Activated CD4-positive, alpha-beta T cell treated with anti-CD3 and anti-CD28 coated beads for 36 hours (primary cell): ENCODE measurements at regions of chr17 and their contacts with region 1.

Region 1: DNA sequence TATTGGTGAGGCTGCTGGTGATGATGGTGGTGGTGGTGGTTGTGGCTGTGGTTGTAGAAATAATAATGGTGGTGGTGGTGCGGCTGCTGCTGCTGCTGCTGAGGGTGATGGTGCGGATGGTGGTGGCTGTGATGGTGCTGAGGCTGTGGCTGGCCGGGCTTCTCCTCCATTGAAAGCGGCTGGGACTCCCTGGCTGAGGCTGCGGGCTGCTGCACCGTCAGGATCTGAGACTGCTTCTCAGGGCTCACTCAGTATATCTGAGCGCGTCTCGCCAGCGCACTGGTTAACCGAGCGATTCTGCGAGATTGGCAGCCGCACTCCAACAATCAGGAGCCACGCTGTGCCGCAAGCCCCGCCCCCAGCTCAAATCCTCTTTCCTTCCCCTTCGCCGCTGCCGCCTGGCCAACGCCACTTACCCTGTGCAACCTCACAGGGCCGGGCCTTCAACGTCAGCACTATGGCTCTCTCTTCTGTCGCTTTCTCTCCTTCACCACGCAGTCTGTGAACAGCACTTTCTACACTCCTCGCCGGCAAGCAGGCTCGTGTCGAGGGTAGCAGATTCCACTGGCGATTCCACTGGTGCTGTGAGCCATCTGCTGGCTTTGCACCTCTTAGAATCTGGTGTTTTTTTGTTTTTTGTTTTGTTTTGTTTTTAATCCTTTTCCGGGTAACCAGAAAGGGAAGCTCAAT is at the start of gene NUFIP2:
- DNase-seq: peak; percentile 99
- ATAC-seq: peak; percentile 93
- H3K4me3 Mint-ChIP-seq: peak within 1 kb of the TSS; percentile 100
- H3K27ac Mint-ChIP-seq: peak within 1 kb of the TSS; percentile 99
- H3K4me1 Mint-ChIP-seq: peaks cover 27% of the 10 kb centered on the region
- H3K27me3 Mint-ChIP-seq: no peaks in the 10 kb centered on the region
- total RNA-seq, gene NUFIP2: 55.1 to 93.1 TPM

Region 2: DNA sequence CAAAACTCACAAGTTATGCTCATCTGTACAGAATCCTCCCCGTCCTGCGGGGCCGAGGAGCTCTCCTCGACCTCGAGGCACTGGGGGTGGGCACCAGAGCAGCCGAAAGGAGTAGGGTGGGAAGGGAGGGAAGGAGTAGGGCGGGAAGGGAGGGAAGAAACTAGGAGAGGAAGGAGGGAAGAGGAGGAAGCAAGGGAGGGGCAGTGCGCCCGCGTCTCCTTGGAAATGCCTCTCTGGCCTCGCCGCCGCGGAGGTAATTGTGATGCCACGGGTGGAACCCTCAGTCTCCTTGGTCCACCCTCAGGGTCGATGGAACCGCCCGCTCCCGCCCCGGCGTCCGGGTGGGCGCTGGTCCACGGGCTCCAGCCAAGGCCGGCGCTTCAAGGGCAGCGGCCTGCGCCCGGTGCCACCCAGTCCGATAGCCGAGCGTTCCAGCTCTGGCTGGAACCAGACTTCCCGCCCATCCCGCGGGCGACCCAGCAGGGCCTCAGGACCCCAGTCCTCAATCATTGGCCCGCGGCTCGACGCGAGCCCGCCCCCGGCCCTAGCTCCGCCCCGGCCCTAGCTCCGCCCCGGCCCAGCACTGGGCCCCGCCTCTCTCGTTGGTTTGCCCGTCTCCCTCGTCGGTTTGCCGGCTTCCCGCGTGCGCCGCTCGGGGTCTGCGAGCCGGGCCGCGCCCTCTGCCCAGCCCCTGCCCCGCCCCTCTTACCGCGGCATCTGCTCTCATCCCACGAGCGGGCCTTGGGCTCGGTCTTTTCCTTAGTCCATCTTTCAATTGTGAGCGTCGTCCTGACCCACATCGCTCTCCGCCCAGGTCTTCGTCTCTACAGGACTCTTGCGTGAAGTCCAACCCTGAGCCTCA is 582.9 kb before region 1 on chr17:
- CTCF ChIA-PET with region 1: no interaction called
- POLR2A ChIA-PET with region 1: no interaction called
- intact Hi-C with region 1: loop called in 1 of 2 experiments (anchors 5 kb)
- DNase-seq: peak; percentile 94
- ATAC-seq: peak; percentile 90
- H3K4me3 Mint-ChIP-seq: peak overlapping the region; percentile 80
- H3K27ac Mint-ChIP-seq: peak overlapping the region; percentile 91
- H3K4me1 Mint-ChIP-seq: peaks cover 19% of the 10 kb centered on the region
- H3K27me3 Mint-ChIP-seq: peaks cover 17% of the 10 kb centered on the region

Region 3: DNA sequence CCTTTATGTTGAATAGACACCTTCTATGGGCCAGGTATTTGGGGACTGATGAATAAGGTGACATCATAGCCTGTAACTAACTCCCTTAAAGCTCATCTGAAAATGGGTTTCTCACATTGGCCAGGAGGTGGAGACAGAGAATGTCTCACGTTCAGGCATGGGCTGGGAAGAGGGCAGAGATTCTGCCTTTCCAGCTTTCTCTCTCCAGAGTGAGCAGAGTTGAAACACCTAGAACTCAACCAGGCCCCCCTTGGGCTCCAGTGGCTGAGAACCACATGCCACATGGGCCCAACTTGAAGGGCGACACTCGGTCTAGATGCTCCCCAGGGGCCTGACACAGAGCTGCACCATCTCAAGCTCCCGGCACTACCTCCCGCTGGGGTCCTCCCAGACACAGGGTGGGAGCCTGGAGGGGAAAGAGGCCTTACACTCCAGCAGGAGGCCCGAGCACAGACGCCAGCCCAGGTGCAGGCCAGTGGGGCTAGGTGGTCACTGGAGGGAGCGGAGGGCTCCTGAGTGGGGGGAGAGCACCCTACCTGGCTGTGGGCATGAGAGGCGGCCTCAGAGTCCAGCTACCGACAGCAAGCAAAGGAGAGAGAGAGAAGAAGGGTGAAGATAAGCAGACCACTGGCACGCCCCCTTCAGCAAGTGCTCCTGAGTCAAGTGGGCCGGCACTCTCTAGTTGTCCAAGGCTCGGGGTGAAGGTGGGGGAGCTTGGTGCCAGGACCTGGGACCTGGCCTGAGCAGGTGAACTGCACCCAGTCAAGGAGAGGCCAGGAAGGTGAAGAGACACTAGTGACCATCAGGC is 169.7 kb before region 1 on chr17:
- CTCF ChIA-PET with region 1: interaction called, 10 read pairs
- POLR2A ChIA-PET with region 1: no interaction called
- intact Hi-C with region 1: loop called in 1 of 2 experiments (anchors 5 kb)
- DNase-seq: peak; percentile 61
- ATAC-seq: peak; percentile 98
- H3K4me3 Mint-ChIP-seq: no peak overlapping the region
- H3K27ac Mint-ChIP-seq: no peak overlapping the region
- H3K4me1 Mint-ChIP-seq: peaks cover 3% of the 10 kb centered on the region
- H3K27me3 Mint-ChIP-seq: no peaks in the 10 kb centered on the region

Region 4: DNA sequence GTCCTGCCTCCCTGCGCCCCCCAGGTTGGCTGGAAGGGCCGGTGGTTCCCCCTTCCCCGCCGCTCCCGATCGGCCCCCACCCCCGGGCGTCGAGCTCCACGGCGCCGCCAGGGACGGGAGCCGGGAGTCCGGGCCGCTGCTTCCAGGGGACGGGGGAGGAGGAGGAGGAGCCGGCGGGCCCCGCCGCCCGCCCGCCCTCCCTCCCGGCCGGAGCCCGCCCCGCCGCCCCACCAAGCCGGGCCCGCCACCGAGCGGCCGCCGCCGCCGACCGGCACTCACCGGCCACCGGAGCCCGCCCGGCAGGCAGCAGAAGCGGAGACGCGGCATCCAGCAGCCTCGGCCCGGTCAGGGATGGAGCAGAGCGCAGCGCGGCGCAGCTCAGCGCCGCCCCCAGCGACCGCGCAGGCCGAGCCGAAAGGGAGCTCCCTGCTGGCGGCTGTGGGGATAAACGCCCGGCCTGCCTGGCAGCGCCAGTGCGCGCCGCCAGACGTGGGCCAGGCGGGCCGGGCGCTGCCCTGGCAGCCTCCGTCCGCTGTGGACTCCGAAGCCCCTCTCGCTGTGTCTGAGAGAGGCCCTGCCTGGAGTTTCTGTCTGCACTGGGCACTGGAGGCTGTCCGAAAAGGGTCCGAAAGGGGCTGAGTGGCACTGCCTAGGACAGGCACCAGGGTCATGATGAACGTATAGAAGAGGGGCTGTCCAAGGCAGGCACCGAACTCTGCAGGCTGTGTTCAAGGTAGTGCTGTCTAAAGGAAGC is 113.8 kb before region 1 on chr17 and contains the start of gene MYO18A:
- CTCF ChIA-PET with region 1: interaction called, 5 read pairs
- POLR2A ChIA-PET with region 1: interaction called, 3 read pairs
- intact Hi-C with region 1: loop called in 1 of 2 experiments (anchors 2 kb)
- DNase-seq: peak; percentile 90
- ATAC-seq: peak; percentile 93
- H3K4me3 Mint-ChIP-seq: peak within 1 kb of the TSS; percentile 23
- H3K27ac Mint-ChIP-seq: no peak within 1 kb of the TSS
- H3K4me1 Mint-ChIP-seq: peaks cover 28% of the 10 kb centered on the region
- H3K27me3 Mint-ChIP-seq: no peaks in the 10 kb centered on the region
- total RNA-seq, gene MYO18A: 31.9 to 38.2 TPM

Region 5: GRCh38 chr17:29389982-29390850 is 96.2 kb after region 1 on chr17 and contains the start of gene TAOK1:
- CTCF ChIA-PET with region 1: no interaction called
- POLR2A ChIA-PET with region 1: interaction called, 3 read pairs
- intact Hi-C with region 1: loop called in 1 of 2 experiments (anchors 1 kb)
- DNase-seq: peak; percentile 99
- ATAC-seq: peak; percentile 95
- H3K4me3 Mint-ChIP-seq: peak within 1 kb of the TSS; percentile 81
- H3K27ac Mint-ChIP-seq: peak within 1 kb of the TSS; percentile 94
- H3K4me1 Mint-ChIP-seq: peaks cover 36% of the 10 kb centered on the region
- H3K27me3 Mint-ChIP-seq: no peaks in the 10 kb centered on the region
- total RNA-seq, gene TAOK1: 29.9 to 35.1 TPM

Region 6: DNA sequence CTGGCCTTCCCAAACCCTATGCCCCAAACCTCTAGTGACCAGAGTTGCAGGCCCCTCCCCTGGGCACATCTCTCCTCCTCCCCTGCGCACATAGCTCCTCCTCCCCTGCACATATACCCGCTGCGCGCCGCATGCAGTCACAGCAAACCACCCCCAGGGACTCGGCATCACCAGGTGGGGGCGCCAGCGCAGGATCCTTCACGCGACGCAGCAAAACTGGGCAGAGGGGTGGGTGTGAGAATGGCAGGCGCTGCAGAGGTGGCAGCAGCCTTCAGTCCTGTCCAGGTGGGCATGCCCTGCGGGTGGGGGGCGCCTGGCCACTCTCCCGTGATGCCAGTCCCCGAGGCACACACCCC is 323.1 kb after region 1 on chr17:
- CTCF ChIA-PET with region 1: interaction called, 5 read pairs
- POLR2A ChIA-PET with region 1: no interaction called
- intact Hi-C with region 1: loop called in 1 of 2 experiments (anchors 2 kb)
- DNase-seq: peak; percentile 98
- ATAC-seq: peak; percentile 82
- H3K4me3 Mint-ChIP-seq: peak overlapping the region; percentile 75
- H3K27ac Mint-ChIP-seq: peak overlapping the region; percentile 89
- H3K4me1 Mint-ChIP-seq: peaks cover 47% of the 10 kb centered on the region
- H3K27me3 Mint-ChIP-seq: peaks cover 2% of the 10 kb centered on the region